Caco-2 (cell line): ENCODE measurements at regions of chr12 and their contacts with region 1.

Region 1: GRCh38 chr12:74111688-74112360 is 425.8 kb upstream of the ATXN7L3B start:
- DNase-seq: peak; percentile 57 to 62
- H3K4me3 ChIP-seq: no peak overlapping the region
- H3K4me3 Mint-ChIP-seq: no peak overlapping the region
- H3K27ac Mint-ChIP-seq: no peak overlapping the region
- H3K4me1 ChIP-seq: no peaks in the 10 kb centered on the region
- H3K4me1 Mint-ChIP-seq: no peaks in the 10 kb centered on the region
- H3K27me3 ChIP-seq: no peaks in the 10 kb centered on the region
- H3K27me3 Mint-ChIP-seq: no peaks in the 10 kb centered on the region
- CTCF ChIP-seq: peak; percentile 63 to 68

Region 2: GRCh38 chr12:73935817-73936216 is 176.0 kb before region 1 on chr12:
- CTCF ChIA-PET with region 1: no interaction called
- POLR2A ChIA-PET with region 1: no interaction called
- intact Hi-C with region 1: loop called (anchors 5 kb)
- DNase-seq: peak in 1 of 2 experiments; percentile 22
- H3K4me3 ChIP-seq: no peak overlapping the region
- H3K4me3 Mint-ChIP-seq: no peak overlapping the region
- H3K27ac Mint-ChIP-seq: no peak overlapping the region
- H3K4me1 ChIP-seq: no peaks in the 10 kb centered on the region
- H3K4me1 Mint-ChIP-seq: no peaks in the 10 kb centered on the region
- H3K27me3 ChIP-seq: no peaks in the 10 kb centered on the region
- H3K27me3 Mint-ChIP-seq: no peaks in the 10 kb centered on the region
- CTCF ChIP-seq: peak; percentile 48 to 54

Region 3: GRCh38 chr12:74264692-74265091 is 152.9 kb after region 1 on chr12:
- CTCF ChIA-PET with region 1: no interaction called
- POLR2A ChIA-PET with region 1: no interaction called
- intact Hi-C with region 1: loop called (anchors 5 kb)
- DNase-seq: no peak
- H3K4me3 ChIP-seq: no peak overlapping the region
- H3K4me3 Mint-ChIP-seq: no peak overlapping the region
- H3K27ac Mint-ChIP-seq: no peak overlapping the region
- H3K4me1 ChIP-seq: no peaks in the 10 kb centered on the region
- H3K4me1 Mint-ChIP-seq: no peaks in the 10 kb centered on the region
- H3K27me3 ChIP-seq: no peaks in the 10 kb centered on the region
- H3K27me3 Mint-ChIP-seq: no peaks in the 10 kb centered on the region
- CTCF ChIP-seq: no peak

Region 4: GRCh38 chr12:74365178-74365964 is 253.5 kb after region 1 on chr12:
- CTCF ChIA-PET with region 1: no interaction called
- POLR2A ChIA-PET with region 1: no interaction called
- intact Hi-C with region 1: loop called (anchors 1 kb)
- DNase-seq: peak; percentile 44 to 60
- H3K4me3 ChIP-seq: no peak overlapping the region
- H3K4me3 Mint-ChIP-seq: no peak overlapping the region
- H3K27ac Mint-ChIP-seq: no peak overlapping the region
- H3K4me1 ChIP-seq: no peaks in the 10 kb centered on the region
- H3K4me1 Mint-ChIP-seq: no peaks in the 10 kb centered on the region
- H3K27me3 ChIP-seq: no peaks in the 10 kb centered on the region
- H3K27me3 Mint-ChIP-seq: no peaks in the 10 kb centered on the region
- CTCF ChIP-seq: peak; percentile 34 to 43

Region 5: GRCh38 chr12:74537707-74538385 is 426.0 kb after region 1 on chr12 and contains the start of gene ATXN7L3B:
- CTCF ChIA-PET with region 1: no interaction called
- POLR2A ChIA-PET with region 1: no interaction called
- intact Hi-C with region 1: loop called (anchors 1 kb)
- DNase-seq: peak; percentile 94
- H3K4me3 ChIP-seq: peak within 1 kb of the TSS; percentile 86
- H3K4me3 Mint-ChIP-seq: peak within 1 kb of the TSS; percentile 98
- H3K27ac Mint-ChIP-seq: peak within 1 kb of the TSS; percentile 99
- H3K4me1 ChIP-seq: peaks cover 7% of the 10 kb centered on the region; the same call in 1 of the 2 replicates
- H3K4me1 Mint-ChIP-seq: peaks cover 18% of the 10 kb centered on the region
- H3K27me3 ChIP-seq: no peaks in the 10 kb centered on the region
- H3K27me3 Mint-ChIP-seq: no peaks in the 10 kb centered on the region
- CTCF ChIP-seq: no peak
- total RNA-seq, gene ATXN7L3B: 29.3 and 30.6 TPM in 2 replicates